Activated naive CD4-positive, alpha-beta T cell treated with anti-CD3 and anti-CD28 coated beads for 36 hours (primary cell): ENCODE measurements at regions of chr19 and their contacts with region 1.

Region 1: GRCh38 chr19:4638828-4639530 is at the start of gene TNFAIP8L1:
- DNase-seq: peak; percentile 99
- H3K4me3 Mint-ChIP-seq: peak within 1 kb of the TSS; percentile 80
- H3K27ac Mint-ChIP-seq: peak within 1 kb of the TSS; percentile 91
- H3K4me1 Mint-ChIP-seq: peaks cover 35% of the 10 kb centered on the region
- H3K27me3 Mint-ChIP-seq: no peaks in the 10 kb centered on the region
- total RNA-seq, gene TNFAIP8L1: 19.9 to 20.4 TPM

Region 2: DNA sequence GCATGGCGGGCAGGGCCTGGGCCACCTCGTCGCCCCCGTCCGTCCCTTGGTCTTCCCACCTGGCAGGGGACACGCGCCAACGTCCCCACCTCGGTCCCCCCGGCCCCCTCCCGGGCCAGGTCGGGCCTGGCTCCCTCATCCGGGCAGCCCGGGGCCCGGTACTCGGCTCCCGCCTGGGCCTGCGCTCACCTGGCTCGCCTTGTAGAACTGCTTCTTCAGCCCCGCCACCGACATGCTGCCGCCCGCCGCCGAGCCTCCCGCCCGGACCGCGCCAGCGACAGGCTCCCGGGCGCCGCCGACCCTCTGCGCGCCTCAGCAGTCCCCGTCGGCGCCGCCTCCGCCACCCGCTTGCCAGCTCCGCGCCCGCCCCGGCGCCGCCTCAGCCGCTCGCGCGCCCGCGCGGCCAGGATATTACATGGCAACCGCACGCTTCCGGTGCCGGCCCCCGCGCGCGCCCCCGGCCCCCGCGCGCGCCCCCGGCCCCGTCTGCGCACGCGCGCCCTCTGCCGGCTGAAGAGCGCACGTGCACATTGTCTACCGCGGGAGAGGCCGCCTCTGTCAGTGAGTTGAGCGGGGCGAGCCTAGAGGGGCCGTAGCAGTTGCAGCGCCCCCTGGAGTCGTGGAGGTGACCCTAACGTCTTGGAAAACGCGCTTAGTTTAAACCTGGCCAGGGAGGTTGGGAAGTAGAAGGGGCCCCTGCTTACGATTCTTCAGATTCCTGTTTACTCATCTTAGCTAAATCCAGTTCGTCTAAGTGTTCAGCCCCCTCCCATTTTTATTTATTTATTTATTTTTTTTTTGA is 238.6 kb before region 1 on chr19 and contains the start of gene SH3GL1:
- CTCF ChIA-PET with region 1: no interaction called
- intact Hi-C with region 1: no loop called
- DNase-seq: peak; percentile 94
- H3K4me3 Mint-ChIP-seq: peak within 1 kb of the TSS; percentile 94
- H3K27ac Mint-ChIP-seq: peak within 1 kb of the TSS; percentile 93
- H3K4me1 Mint-ChIP-seq: peaks cover 73% of the 10 kb centered on the region
- H3K27me3 Mint-ChIP-seq: no peaks in the 10 kb centered on the region
- total RNA-seq, gene SH3GL1: 31.7 to 32.1 TPM

Region 3: GRCh38 chr19:4415352-4415751 is 223.6 kb before region 1 on chr19:
- CTCF ChIA-PET with region 1: no interaction called
- intact Hi-C with region 1: no loop called
- DNase-seq: no peak
- H3K4me3 Mint-ChIP-seq: no peak overlapping the region
- H3K27ac Mint-ChIP-seq: no peak overlapping the region
- H3K4me1 Mint-ChIP-seq: peaks cover 2% of the 10 kb centered on the region
- H3K27me3 Mint-ChIP-seq: no peaks in the 10 kb centered on the region

Region 4: GRCh38 chr19:4567584-4568071 is 71.4 kb before region 1 on chr19:
- CTCF ChIA-PET with region 1: interaction called, 70 read pairs
- intact Hi-C with region 1: loop called (anchors 1 kb)
- DNase-seq: peak; percentile 83
- H3K4me3 Mint-ChIP-seq: no peak overlapping the region
- H3K27ac Mint-ChIP-seq: no peak overlapping the region
- H3K4me1 Mint-ChIP-seq: no peaks in the 10 kb centered on the region
- H3K27me3 Mint-ChIP-seq: peaks cover 5% of the 10 kb centered on the region

Region 5: DNA sequence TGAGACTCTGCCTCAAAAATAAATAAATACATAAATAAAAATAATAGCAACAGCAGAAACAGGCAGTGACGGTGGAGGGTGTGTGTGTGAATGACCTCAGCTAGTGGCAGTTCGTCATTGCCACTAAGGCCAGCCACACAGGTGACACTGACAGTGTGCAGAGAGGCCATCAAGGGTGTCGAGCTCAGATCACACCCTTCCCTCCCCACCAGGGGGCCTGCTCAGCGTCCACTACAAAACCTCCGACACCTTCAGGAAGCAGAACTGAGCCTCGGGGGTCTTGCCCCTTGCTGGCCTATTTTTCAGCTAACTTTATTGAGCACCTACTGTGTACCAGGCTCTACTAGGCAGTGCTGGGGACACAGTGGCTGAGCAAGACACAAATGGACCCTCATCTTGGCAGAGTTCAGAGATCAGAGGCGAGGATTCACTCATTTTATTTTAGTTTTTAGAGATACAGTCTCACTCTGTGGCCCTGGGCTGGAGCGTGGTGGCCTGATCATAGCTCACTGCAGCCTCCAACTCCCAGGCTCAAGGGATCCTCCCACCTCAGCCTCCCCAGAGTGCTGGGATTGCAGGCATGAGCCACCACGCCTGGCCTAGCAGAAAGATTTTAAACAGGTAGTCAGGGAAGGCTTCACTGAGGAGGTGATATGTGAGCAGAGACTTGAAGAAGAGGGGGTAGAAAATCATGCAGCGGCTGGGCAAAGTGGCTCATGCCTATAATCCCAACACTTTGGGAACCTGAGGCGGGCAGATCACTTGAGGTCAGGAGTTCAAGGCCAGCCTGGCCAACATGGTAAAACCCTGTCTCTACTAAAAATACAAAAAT is 49.2 kb before region 1 on chr19:
- CTCF ChIA-PET with region 1: interaction called, 15 read pairs
- intact Hi-C with region 1: no loop called
- DNase-seq: peak; percentile 35
- H3K4me3 Mint-ChIP-seq: no peak overlapping the region
- H3K27ac Mint-ChIP-seq: no peak overlapping the region
- H3K4me1 Mint-ChIP-seq: no peaks in the 10 kb centered on the region
- H3K27me3 Mint-ChIP-seq: peaks cover 49% of the 10 kb centered on the region

Region 6: GRCh38 chr19:4669723-4670480 is 30.9 kb after region 1 on chr19 and contains the start of gene MYDGF:
- CTCF ChIA-PET with region 1: interaction called, 8 read pairs
- intact Hi-C with region 1: loop called (anchors 1 kb)
- DNase-seq: peak; percentile 94
- H3K4me3 Mint-ChIP-seq: peak within 1 kb of the TSS; percentile 86
- H3K27ac Mint-ChIP-seq: peak within 1 kb of the TSS; percentile 46
- H3K4me1 Mint-ChIP-seq: peaks cover 18% of the 10 kb centered on the region
- H3K27me3 Mint-ChIP-seq: no peaks in the 10 kb centered on the region
- total RNA-seq, gene MYDGF: 43.5 to 45.5 TPM